Activated B cell treated with CpG ODN at 0.5 μM for 24 hours (primary cell): ENCODE measurements at regions of chr1 and their contacts with region 1.

Region 1: DNA sequence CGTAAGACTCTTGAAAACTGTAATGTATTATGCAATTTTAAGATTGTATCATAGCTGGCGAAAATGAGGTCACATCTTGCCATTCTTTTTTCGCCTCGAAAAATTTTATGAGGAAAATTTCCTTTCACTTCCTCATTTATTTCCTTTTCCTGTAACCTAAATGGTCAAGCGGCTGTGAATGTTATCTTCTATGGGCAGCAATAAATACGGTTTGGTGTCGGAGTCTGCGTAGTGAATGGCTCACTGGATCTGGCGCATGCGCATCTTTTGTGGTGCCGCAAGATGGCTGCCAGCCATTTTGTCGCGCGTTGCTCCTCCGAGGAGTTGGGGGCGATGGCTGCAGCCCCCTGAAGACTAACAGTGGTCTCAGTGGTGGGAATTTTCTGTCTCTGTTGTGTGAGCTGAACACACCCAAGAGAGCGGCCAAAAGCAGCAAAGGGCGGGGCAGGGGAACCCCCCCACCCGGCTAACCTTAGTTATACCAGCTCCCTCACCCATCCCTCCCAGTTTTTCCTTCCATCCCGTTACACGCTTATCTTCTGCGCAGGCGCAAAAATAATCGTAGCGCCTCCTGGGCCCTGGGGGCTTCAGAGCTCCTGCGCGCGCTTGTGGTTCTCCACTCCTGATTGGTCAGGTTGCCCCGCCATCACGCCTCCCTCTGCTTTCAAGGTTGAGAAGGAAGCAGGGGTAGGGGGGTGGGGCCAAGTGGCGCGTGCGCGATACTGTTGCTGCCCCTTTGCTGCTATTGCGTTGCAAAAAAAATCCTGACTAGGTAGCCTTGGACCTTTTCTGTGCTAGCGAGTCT is at the start of gene RPRD2:
- DNase-seq: peak; percentile 90
- ATAC-seq: peak; percentile 93
- H3K4me3 Mint-ChIP-seq: peak within 1 kb of the TSS; percentile 95
- H3K27ac Mint-ChIP-seq: peak within 1 kb of the TSS; percentile 98
- H3K4me1 Mint-ChIP-seq: peaks cover 37% of the 10 kb centered on the region
- H3K27me3 Mint-ChIP-seq: no peaks in the 10 kb centered on the region
- CTCF ChIP-seq: no peak
- total RNA-seq, gene RPRD2: 27.1 and 28.6 TPM in 2 replicates

Region 2: DNA sequence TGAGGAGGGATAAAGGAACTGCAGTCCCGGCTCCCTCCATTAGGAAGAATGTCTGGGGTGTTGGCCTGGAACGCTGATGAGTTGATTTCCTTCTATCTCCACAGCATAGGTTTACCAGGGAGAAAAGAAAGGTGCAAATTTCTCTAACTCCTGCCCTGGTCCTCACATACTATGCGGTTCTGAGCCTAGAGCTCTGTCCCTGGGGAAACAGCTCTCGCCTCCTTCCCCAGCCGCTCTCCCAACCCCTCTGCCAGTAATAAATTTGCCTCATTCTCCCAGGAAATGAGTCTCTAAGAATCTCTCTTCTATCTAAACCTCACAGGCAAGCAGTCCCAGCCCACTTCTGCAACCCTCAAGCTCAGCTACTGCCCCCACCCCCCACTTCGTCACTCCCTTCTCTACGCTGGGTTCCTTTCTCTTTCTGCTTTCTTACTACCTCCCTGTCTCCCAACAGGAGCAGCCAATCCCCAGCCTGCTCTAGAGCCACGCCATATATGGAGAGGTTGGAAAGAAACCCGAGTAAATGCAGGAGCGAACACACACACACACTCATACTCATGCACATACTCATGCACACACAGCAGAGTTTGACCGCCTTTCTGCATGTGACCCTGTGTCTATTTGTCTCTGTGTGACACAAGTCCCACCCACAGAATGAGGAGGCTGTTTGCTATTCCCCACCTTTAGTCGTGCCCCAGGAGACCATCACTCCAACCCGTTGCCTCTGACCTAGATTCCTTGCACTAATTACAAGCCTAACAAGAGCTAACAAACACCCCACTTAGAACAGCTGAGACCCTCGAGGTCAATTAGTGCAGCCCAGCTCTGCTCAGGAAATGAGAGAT is 200.5 kb before region 1 on chr1:
- CTCF ChIA-PET with region 1: no interaction called
- POLR2A ChIA-PET with region 1: interaction called, 11 read pairs
- intact Hi-C with region 1: no loop called
- DNase-seq: peak; percentile 34
- ATAC-seq: peak; percentile 28
- H3K4me3 Mint-ChIP-seq: peak overlapping the region; percentile 81
- H3K27ac Mint-ChIP-seq: peak overlapping the region; percentile 98
- H3K4me1 Mint-ChIP-seq: peaks cover 86% of the 10 kb centered on the region
- H3K27me3 Mint-ChIP-seq: no peaks in the 10 kb centered on the region
- CTCF ChIP-seq: no peak

Region 3: GRCh38 chr1:150281837-150282653 is 81.6 kb before region 1 on chr1 and contains the start of gene CIART:
- CTCF ChIA-PET with region 1: no interaction called
- POLR2A ChIA-PET with region 1: interaction called, 6 read pairs
- intact Hi-C with region 1: loop called (anchors 1 kb)
- DNase-seq: peak; percentile 39
- ATAC-seq: peak; percentile 84
- H3K4me3 Mint-ChIP-seq: peak within 1 kb of the TSS; percentile 85
- H3K27ac Mint-ChIP-seq: peak within 1 kb of the TSS; percentile 67
- H3K4me1 Mint-ChIP-seq: peaks cover 20% of the 10 kb centered on the region
- H3K27me3 Mint-ChIP-seq: peaks cover 3% of the 10 kb centered on the region
- CTCF ChIP-seq: no peak
- total RNA-seq, gene CIART: 0.20 and 1.0 TPM in 2 replicates

Region 4: GRCh38 chr1:150352866-150353265 is 10.8 kb before region 1 on chr1:
- CTCF ChIA-PET with region 1: no interaction called
- POLR2A ChIA-PET with region 1: interaction called, 16 read pairs
- intact Hi-C with region 1: no loop called
- DNase-seq: no peak
- ATAC-seq: no peak
- H3K4me3 Mint-ChIP-seq: no peak overlapping the region
- H3K27ac Mint-ChIP-seq: no peak overlapping the region
- H3K4me1 Mint-ChIP-seq: no peaks in the 10 kb centered on the region
- H3K27me3 Mint-ChIP-seq: no peaks in the 10 kb centered on the region
- CTCF ChIP-seq: no peak

Region 5: GRCh38 chr1:150486964-150487762 is 123.5 kb after region 1 on chr1 and contains the start of gene TARS2:
- CTCF ChIA-PET with region 1: no interaction called
- POLR2A ChIA-PET with region 1: interaction called, 26 read pairs
- intact Hi-C with region 1: no loop called
- DNase-seq: peak; percentile 78
- ATAC-seq: peak; percentile 100
- H3K4me3 Mint-ChIP-seq: peak within 1 kb of the TSS; percentile 96
- H3K27ac Mint-ChIP-seq: peak within 1 kb of the TSS; percentile 98
- H3K4me1 Mint-ChIP-seq: peaks cover 18% of the 10 kb centered on the region
- H3K27me3 Mint-ChIP-seq: no peaks in the 10 kb centered on the region
- CTCF ChIP-seq: no peak
- total RNA-seq, gene TARS2: 42.6 and 50.7 TPM in 2 replicates

Region 6: GRCh38 chr1:150629115-150629928 is 265.7 kb after region 1 on chr1 and contains the start of gene ENSA:
- CTCF ChIA-PET with region 1: no interaction called
- POLR2A ChIA-PET with region 1: interaction called, 18 read pairs
- intact Hi-C with region 1: loop called (anchors 5 kb)
- DNase-seq: peak; percentile 84
- ATAC-seq: peak; percentile 88
- H3K4me3 Mint-ChIP-seq: no peak within 1 kb of the TSS
- H3K27ac Mint-ChIP-seq: no peak within 1 kb of the TSS
- H3K4me1 Mint-ChIP-seq: peaks cover 21% of the 10 kb centered on the region
- H3K27me3 Mint-ChIP-seq: no peaks in the 10 kb centered on the region
- CTCF ChIP-seq: no peak
- total RNA-seq, gene ENSA: 202 and 227 TPM in 2 replicates